ENCODE measurements at regions of chr9 and their contacts with region 1.

Region 1: DNA sequence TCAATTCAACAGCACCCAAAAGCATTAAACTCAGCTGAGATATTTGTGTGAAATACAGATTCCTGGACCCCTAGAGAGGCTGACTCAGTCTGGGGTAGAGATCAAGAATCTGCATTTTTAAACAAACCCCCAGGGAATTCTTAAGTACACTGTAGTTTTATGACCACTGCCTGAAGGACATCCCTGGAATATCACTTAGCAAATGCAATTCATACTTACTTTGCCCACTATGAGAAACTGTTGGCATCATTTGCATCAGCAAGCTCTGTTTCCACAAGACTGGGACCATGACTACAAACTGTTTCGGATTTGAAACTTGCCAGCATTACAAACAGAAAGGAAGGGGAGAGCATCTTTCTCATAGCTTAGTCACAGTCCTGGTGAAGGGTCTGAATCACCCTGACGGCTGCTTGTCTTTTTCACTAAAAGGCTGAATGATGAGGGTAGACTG is 63.7 kb downstream of the MLLT3 start:
- DNase-seq: peak; percentile 70
- H3K4me3 Mint-ChIP-seq: peak overlapping the region; percentile 36
- H3K27ac Mint-ChIP-seq: peak overlapping the region; percentile 59
- H3K4me1 Mint-ChIP-seq: peaks cover 86% of the 10 kb centered on the region
- H3K27me3 Mint-ChIP-seq: no peaks in the 10 kb centered on the region

Region 2: GRCh38 chr9:19471737-19472648 is 1086.6 kb before region 1 on chr9:
- CTCF ChIA-PET with region 1: no interaction called
- intact Hi-C with region 1: loop called (anchors 10 kb)
- DNase-seq: peak; percentile 77
- H3K4me3 Mint-ChIP-seq: peak overlapping the region; percentile 9
- H3K27ac Mint-ChIP-seq: no peak overlapping the region
- H3K4me1 Mint-ChIP-seq: peaks cover 14% of the 10 kb centered on the region
- H3K27me3 Mint-ChIP-seq: peaks cover 3% of the 10 kb centered on the region

Region 3: DNA sequence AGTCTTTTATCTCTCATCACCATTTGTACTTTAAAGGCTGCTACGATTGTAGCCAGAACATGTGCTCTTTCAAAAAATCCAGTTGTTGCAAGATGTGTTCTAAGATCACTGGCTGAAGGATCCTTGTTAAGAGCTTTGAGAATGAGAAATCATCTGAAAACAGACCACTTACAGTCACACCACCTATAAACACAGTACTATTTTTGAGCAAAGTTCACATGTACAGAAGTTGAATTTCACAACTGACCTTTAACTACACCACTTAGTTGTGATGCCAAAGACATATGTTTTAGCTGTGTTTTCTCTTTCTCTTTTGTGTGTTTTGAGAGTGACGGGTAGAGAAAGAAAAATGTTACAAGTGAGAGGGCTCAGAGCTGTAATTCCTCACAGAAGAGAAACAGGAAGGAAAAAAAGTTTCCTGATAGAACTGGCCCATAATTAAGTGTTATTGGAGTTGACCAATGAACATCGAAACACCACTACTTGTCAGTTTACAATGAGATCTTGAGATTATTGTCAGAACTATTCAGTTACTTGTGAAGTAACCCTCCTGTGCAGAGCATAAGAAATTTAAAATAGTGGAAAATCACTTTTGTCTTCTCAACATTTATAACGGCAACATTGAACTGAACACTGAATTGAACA is 181.7 kb before region 1 on chr9:
- CTCF ChIA-PET with region 1: no interaction called
- intact Hi-C with region 1: loop called (anchors 5 kb)
- DNase-seq: no peak
- H3K4me3 Mint-ChIP-seq: peak overlapping the region; percentile 58
- H3K27ac Mint-ChIP-seq: peak overlapping the region; percentile 76
- H3K4me1 Mint-ChIP-seq: peaks cover 62% of the 10 kb centered on the region
- H3K27me3 Mint-ChIP-seq: no peaks in the 10 kb centered on the region

Region 4: GRCh38 chr9:20538956-20539355 is 19.6 kb before region 1 on chr9:
- CTCF ChIA-PET with region 1: no interaction called
- intact Hi-C with region 1: loop called (anchors 1 kb)
- DNase-seq: no peak
- H3K4me3 Mint-ChIP-seq: no peak overlapping the region
- H3K27ac Mint-ChIP-seq: no peak overlapping the region
- H3K4me1 Mint-ChIP-seq: peaks cover 62% of the 10 kb centered on the region
- H3K27me3 Mint-ChIP-seq: no peaks in the 10 kb centered on the region

Region 5: DNA sequence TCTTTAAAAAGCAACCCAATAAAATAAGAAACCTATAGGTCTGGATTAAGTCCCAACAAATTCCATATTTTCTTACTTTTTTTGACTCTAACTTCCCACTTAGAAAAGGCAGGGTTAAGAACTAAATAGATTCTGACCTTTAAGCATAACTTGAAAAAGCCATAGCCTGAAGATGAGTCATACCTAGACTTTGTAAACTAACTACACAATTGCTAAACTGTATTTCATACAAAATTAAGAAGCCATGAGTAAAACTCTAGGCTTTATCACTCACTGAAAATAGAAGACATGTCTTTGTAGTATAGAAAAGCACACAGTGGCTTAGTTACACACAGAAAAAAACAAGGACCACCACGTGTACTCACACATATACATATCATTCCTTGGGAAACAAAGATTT is 12.2 kb after region 1 on chr9:
- CTCF ChIA-PET with region 1: no interaction called
- intact Hi-C with region 1: loop called (anchors 1 kb)
- DNase-seq: no peak
- H3K4me3 Mint-ChIP-seq: no peak overlapping the region
- H3K27ac Mint-ChIP-seq: peak overlapping the region; percentile 52
- H3K4me1 Mint-ChIP-seq: peaks cover 71% of the 10 kb centered on the region
- H3K27me3 Mint-ChIP-seq: no peaks in the 10 kb centered on the region

Region 6: GRCh38 chr9:20604562-20604961 is 46.0 kb after region 1 on chr9:
- CTCF ChIA-PET with region 1: interaction called, 3 read pairs
- intact Hi-C with region 1: loop called (anchors 2 kb)
- DNase-seq: no peak
- H3K4me3 Mint-ChIP-seq: peak overlapping the region; percentile 53
- H3K27ac Mint-ChIP-seq: no peak overlapping the region
- H3K4me1 Mint-ChIP-seq: peaks cover 72% of the 10 kb centered on the region
- H3K27me3 Mint-ChIP-seq: no peaks in the 10 kb centered on the region